ENCODE measurements at regions of chrX and their contacts with region 1.

Region 1: DNA sequence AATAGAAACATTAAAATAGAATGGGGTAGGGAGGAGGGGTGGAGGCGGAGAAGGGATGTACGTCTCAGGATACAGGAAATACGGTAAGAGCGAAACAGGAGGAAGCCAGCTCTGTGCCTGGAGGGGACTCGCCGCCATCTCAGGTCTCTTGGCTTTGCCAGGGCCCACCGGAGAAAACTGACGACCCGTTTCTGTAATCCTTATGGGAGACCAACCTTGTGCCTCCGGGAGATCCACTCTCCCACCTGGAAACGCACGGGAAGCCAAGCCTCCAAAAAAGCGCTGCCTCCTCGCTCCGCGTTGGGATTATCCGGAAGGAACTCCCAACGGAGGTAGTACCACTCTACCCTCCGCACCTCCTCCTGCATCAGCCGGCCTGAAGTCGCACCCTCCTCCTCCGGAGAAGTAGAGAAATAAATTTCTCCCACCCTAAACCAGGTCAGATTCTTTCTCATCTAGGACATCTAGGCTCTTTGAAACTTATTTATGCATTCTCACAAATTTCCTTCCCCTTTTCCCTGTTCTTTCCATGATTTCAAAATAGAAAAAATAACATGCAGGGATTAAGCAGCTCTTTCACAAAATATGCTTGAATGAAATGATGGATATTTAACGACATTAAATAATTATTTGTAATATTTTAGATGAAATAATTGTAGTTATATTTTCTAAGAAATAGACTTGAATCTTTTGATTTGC is at the start of gene NBDY:
- DNase-seq: peak; percentile 33
- H3K4me3 ChIP-seq: peak within 1 kb of the TSS; percentile 3 to 64 (median 46)
- H3K27ac ChIP-seq: peak within 1 kb of the TSS; percentile 70 to 81 (median 76)
- H3K4me1 ChIP-seq: peaks cover 0 to 9% (median 0%) of the 10 kb centered on the region in 4 donors
- H3K27me3 ChIP-seq: no peaks in the 10 kb centered on the region
- CTCF ChIP-seq: no peak
- EP300 ChIP-seq: no peak
- POLR2A ChIP-seq: no peak
- total RNA-seq, gene NBDY: 4.1 to 10.5 (median 9.4) TPM in 3 of 4 donors, not detected in the other

Region 2: GRCh38 chrX:56268888-56269287 is 460.4 kb before region 1 on chrX:
- in situ Hi-C with region 1: loop called in 2 of 4 experiments (anchors 25 kb)
- intact Hi-C with region 1: no loop called
- DNase-seq: no peak
- H3K4me3 ChIP-seq: no peak overlapping the region
- H3K27ac ChIP-seq: no peak overlapping the region
- H3K4me1 ChIP-seq: no peaks in the 10 kb centered on the region
- H3K27me3 ChIP-seq: no peaks in the 10 kb centered on the region
- CTCF ChIP-seq: no peak
- EP300 ChIP-seq: no peak
- POLR2A ChIP-seq: no peak

Region 3: GRCh38 chrX:56503941-56504662 is 225.2 kb before region 1 on chrX:
- in situ Hi-C with region 1: no loop called
- intact Hi-C with region 1: no loop called
- DNase-seq: no peak
- H3K4me3 ChIP-seq: no peak overlapping the region
- H3K27ac ChIP-seq: no peak overlapping the region
- H3K4me1 ChIP-seq: no peaks in the 10 kb centered on the region
- H3K27me3 ChIP-seq: no peaks in the 10 kb centered on the region
- CTCF ChIP-seq: no peak
- EP300 ChIP-seq: no peak
- POLR2A ChIP-seq: no peak

Region 4: GRCh38 chrX:56563231-56564161 is 165.8 kb before region 1 on chrX and contains the start of gene UBQLN2:
- in situ Hi-C with region 1: loop called in 1 of 4 experiments (anchors 25 kb)
- intact Hi-C with region 1: no loop called
- DNase-seq: peak; percentile 85
- H3K4me3 ChIP-seq: peak within 1 kb of the TSS; percentile 52 to 76 (median 64)
- H3K27ac ChIP-seq: peak within 1 kb of the TSS; percentile 92 to 98 (median 96)
- H3K4me1 ChIP-seq: peaks cover 0 to 16% (median 12%) of the 10 kb centered on the region in 4 donors
- H3K27me3 ChIP-seq: no peaks in the 10 kb centered on the region
- CTCF ChIP-seq: no peak
- EP300 ChIP-seq: no peak
- POLR2A ChIP-seq: peak; percentile 83
- total RNA-seq, gene UBQLN2: 10.0 to 20.6 (median 19.2) TPM

Region 5: GRCh38 chrX:58025979-58026378 is 1296.7 kb after region 1 on chrX:
- in situ Hi-C with region 1: no loop called
- intact Hi-C with region 1: no loop called
- DNase-seq: peak; percentile 27
- H3K4me3 ChIP-seq: no peak overlapping the region
- H3K27ac ChIP-seq: no peak overlapping the region
- H3K4me1 ChIP-seq: no peaks in the 10 kb centered on the region
- H3K27me3 ChIP-seq: no peaks in the 10 kb centered on the region
- CTCF ChIP-seq: peak; percentile 9 to 50 (median 26)
- EP300 ChIP-seq: no peak
- POLR2A ChIP-seq: no peak